ENCODE measurements at regions of chr12 and their contacts with region 1.

Region 1: GRCh38 chr12:80632835-80633234 is 74.6 kb upstream of the MYF6 start:
- H3K4me3 ChIP-seq: no peak overlapping the region
- H3K27ac ChIP-seq: no peak overlapping the region
- H3K4me1 ChIP-seq: no peaks in the 10 kb centered on the region
- CTCF ChIP-seq: no peak

Region 2: GRCh38 chr12:80472902-80473500 is 159.8 kb before region 1 on chr12:
- CTCF ChIA-PET with region 1: interaction called, 14 read pairs
- POLR2A ChIA-PET with region 1: no interaction called
- H3K4me3 ChIP-seq: no peak overlapping the region
- H3K27ac ChIP-seq: no peak overlapping the region
- H3K4me1 ChIP-seq: no peaks in the 10 kb centered on the region
- CTCF ChIP-seq: 0 out of 2 replicates have a peak, but pooled peaks have one; percentile 29

Measured in HEK293 (cell line).